ENCODE measurements at regions of chr19 and their contacts with region 1.

Region 1: GRCh38 chr19:19489804-19490655 is 25.3 kb downstream of the TSSK6 start:
- DNase-seq: peak; percentile 81 to 88
- H3K4me3 ChIP-seq: peak overlapping the region; percentile 3 to 32
- H3K27ac ChIP-seq: peak overlapping the region; percentile 78 to 86
- H3K4me1 ChIP-seq: peaks cover 0 to 50% (median 29%) of the 10 kb centered on the region in 4 donors
- H3K27me3 ChIP-seq: no peaks in the 10 kb centered on the region
- CTCF ChIP-seq: peak; percentile 82 to 88

Region 2: GRCh38 chr19:19366612-19367396 is 123.2 kb before region 1 on chr19:
- intact Hi-C with region 1: loop called (anchors 2 kb)
- DNase-seq: peak; percentile 55 to 80
- H3K4me3 ChIP-seq: no peak overlapping the region
- H3K27ac ChIP-seq: peak overlapping the region in 1 of 2 donors; percentile 4
- H3K4me1 ChIP-seq: peaks cover 0 to 19% (median 4%) of the 10 kb centered on the region in 4 donors
- H3K27me3 ChIP-seq: no peaks in the 10 kb centered on the region
- CTCF ChIP-seq: peak; percentile 89 to 95

Region 3: GRCh38 chr19:19404879-19405860 is 84.9 kb before region 1 on chr19 and contains the start of gene GATAD2A:
- intact Hi-C with region 1: no loop called
- DNase-seq: peak; percentile 92 to 97
- H3K4me3 ChIP-seq: peak within 1 kb of the TSS; percentile 75 to 89
- H3K27ac ChIP-seq: peak within 1 kb of the TSS; percentile 85 to 88
- H3K4me1 ChIP-seq: peaks cover 0 to 62% (median 37%) of the 10 kb centered on the region in 4 donors
- H3K27me3 ChIP-seq: no peaks in the 10 kb centered on the region
- CTCF ChIP-seq: peak; percentile 16 to 26

Measured in tibial artery (tissue), 4 donors.